A549 (cell line): ENCODE measurements at regions of chr17 and their contacts with region 1.

Region 1: GRCh38 chr17:73478768-73479424 is 165.3 kb downstream of the SDK2 start:
- DNase-seq: peak; percentile 26 to 36
- ATAC-seq: peak in 1 of 2 experiments; percentile 74; a peak in 4 of 6 replicates
- H3K4me3 ChIP-seq: no peak overlapping the region
- H3K27ac ChIP-seq: no peak overlapping the region
- H3K4me1 ChIP-seq: peaks cover 7% of the 10 kb centered on the region; the same call in 2 of the 3 replicates
- CTCF ChIP-seq: peak; percentile 34; the same call in 2 of the 3 replicates
- EP300 ChIP-seq: no peak
- POLR2A ChIP-seq: no peak
- RAD21 ChIP-seq: peak; percentile 33 to 41; a peak in 4 of 5 replicates

Region 2: GRCh38 chr17:73436954-73437353 is 41.9 kb before region 1 on chr17:
- CTCF ChIA-PET with region 1: no interaction called
- POLR2A ChIA-PET with region 1: no interaction called
- DNase-seq: no peak
- ATAC-seq: no peak
- H3K4me3 ChIP-seq: no peak overlapping the region
- H3K27ac ChIP-seq: no peak overlapping the region
- H3K4me1 ChIP-seq: no peaks in the 10 kb centered on the region
- CTCF ChIP-seq: no peak
- EP300 ChIP-seq: no peak
- POLR2A ChIP-seq: no peak
- RAD21 ChIP-seq: no peak

Region 3: DNA sequence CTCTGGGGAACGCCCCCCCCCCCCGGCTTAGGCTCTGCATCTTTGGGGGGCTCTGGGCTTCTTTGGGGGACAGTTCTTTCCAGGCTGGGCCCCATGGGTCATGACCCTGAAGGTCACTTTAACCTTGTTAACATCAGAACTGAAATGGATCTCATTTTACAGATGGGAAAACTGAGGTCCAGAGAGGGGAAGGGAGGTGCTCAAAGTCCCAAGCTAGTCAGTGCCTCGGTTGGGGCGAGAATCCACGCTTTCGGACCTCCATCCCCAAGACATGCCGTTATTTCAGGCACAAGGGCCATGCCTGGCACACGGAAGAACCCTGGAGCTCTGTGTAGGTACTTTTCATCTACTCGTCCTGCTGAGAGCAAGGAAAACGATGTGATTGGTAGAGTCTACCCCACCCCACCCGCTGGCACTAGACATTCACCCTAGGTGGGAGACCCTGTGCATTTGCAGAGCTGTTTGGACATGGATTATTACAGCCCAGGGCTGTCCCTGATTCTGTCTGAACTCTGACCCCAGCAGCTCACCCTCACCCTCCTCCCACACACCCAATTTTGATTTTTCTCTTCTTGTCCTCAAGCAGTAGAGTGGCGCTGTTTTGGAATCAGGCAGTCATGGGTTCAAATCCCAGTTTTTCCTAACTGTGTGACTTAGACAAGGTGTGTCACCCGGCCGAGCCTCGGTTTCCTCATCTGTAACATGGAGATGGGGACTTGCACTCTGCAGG is 12.0 kb before region 1 on chr17:
- CTCF ChIA-PET with region 1: interaction called, 15 read pairs
- POLR2A ChIA-PET with region 1: no interaction called
- DNase-seq: no peak
- ATAC-seq: no peak; a peak in 1 of 6 replicates
- H3K4me3 ChIP-seq: no peak overlapping the region
- H3K27ac ChIP-seq: no peak overlapping the region
- H3K4me1 ChIP-seq: no peaks in the 10 kb centered on the region
- CTCF ChIP-seq: no peak
- EP300 ChIP-seq: no peak
- POLR2A ChIP-seq: no peak
- RAD21 ChIP-seq: no peak